Prostate gland (tissue), 2 donors: ENCODE measurements at regions of chr4 and their contacts with region 1.

Region 1: GRCh38 chr4:16001484-16001858 is 38.5 kb upstream of the FGFBP2 start:
- DNase-seq: peak; percentile 35
- H3K4me3 ChIP-seq: no peak overlapping the region
- H3K27ac ChIP-seq: no peak overlapping the region
- H3K4me1 ChIP-seq: no peaks in the 10 kb centered on the region
- H3K27me3 ChIP-seq: no peaks in the 10 kb centered on the region
- CTCF ChIP-seq: peak; percentile 11 to 73 (median 66)
- POLR2A ChIP-seq: no peak

Region 2: GRCh38 chr4:15729910-15730533 is 271.4 kb before region 1 on chr4:
- intact Hi-C with region 1: loop called (anchors 10 kb)
- DNase-seq: peak; percentile 27
- H3K4me3 ChIP-seq: no peak overlapping the region
- H3K27ac ChIP-seq: no peak overlapping the region
- H3K4me1 ChIP-seq: no peaks in the 10 kb centered on the region
- H3K27me3 ChIP-seq: no peaks in the 10 kb centered on the region
- CTCF ChIP-seq: peak; percentile 71 to 83 (median 78)
- POLR2A ChIP-seq: no peak

Region 3: DNA sequence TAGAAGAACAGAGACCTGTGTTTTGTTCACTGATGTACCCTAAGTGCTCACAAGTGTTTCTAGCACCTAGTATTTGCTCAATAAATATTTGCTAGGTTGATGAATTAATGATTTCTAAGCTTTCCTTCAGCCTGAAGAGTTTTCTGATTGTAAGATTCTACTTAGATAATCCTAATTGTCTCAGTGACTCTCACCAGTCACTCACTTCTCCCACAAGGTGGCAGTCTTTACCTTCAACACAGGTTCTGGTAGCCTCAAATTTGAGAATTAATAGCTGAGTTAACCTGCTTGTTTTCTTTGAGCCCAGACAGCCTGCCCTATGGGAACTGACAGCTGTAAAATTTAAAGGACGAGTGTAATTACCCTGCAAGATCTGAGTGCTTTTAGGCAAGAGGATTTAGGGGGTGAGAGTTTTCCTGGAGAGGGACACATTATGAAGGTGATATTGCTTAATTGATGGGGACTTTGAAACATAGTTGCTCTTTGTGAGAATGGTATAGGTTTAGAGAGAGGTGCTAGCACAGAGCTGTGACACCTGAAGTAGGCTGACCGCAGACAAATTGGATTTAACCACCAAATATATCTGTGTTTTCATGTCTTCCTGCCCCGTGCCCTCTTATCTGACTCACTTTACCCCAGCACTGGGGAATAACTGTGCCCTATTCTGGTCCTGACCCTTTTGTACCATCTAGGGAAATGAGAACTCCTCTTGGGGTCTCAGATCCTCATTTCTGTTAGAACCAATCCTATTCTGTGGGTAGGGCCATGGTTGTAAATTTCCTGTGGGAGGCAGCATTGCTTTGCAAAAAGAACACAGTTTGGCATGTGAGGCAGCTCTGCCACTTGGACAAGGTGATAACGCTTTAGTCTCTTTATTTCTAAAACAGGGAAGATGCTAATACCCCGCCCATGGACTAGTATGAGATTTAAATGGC is 195.6 kb before region 1 on chr4:
- intact Hi-C with region 1: loop called (anchors 5 kb)
- DNase-seq: peak; percentile 62
- H3K4me3 ChIP-seq: no peak overlapping the region
- H3K27ac ChIP-seq: no peak overlapping the region
- H3K4me1 ChIP-seq: no peaks in the 10 kb centered on the region
- H3K27me3 ChIP-seq: no peaks in the 10 kb centered on the region
- CTCF ChIP-seq: peak in 3 of 4 experiments; percentile 74 to 83 (median 80)
- POLR2A ChIP-seq: no peak

Region 4: GRCh38 chr4:15882675-15883086 is 118.8 kb before region 1 on chr4:
- intact Hi-C with region 1: loop called (anchors 5 kb)
- DNase-seq: peak; percentile 48
- H3K4me3 ChIP-seq: no peak overlapping the region
- H3K27ac ChIP-seq: no peak overlapping the region
- H3K4me1 ChIP-seq: no peaks in the 10 kb centered on the region
- H3K27me3 ChIP-seq: no peaks in the 10 kb centered on the region
- CTCF ChIP-seq: peak; percentile 62 to 85 (median 80)
- POLR2A ChIP-seq: no peak

Region 5: DNA sequence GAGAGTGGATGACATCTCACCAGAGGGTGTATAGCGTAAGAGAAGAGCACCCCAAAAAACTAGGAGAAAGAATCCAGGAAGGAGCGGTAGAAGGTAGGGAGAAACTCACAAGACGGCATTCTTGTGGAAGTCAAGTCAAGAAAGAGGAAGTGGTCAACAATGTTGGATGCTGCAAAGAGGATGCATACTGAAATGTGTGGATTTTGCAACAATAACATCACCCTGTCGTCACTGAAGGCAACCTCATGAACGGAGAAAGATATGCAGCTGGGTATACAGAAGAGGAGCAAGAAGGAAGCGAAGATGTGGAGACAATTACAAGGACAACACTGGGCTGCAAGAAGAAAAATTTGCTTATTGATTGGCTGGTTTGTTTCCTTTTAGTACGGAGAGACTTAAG is 236.2 kb after region 1 on chr4:
- intact Hi-C with region 1: no loop called
- DNase-seq: no peak
- H3K4me3 ChIP-seq: no peak overlapping the region
- H3K27ac ChIP-seq: no peak overlapping the region
- H3K4me1 ChIP-seq: no peaks in the 10 kb centered on the region
- H3K27me3 ChIP-seq: no peaks in the 10 kb centered on the region
- CTCF ChIP-seq: no peak
- POLR2A ChIP-seq: no peak